Tibial artery (tissue), 4 donors: ENCODE measurements at regions of chr22 and their contacts with region 1.

Region 1: DNA sequence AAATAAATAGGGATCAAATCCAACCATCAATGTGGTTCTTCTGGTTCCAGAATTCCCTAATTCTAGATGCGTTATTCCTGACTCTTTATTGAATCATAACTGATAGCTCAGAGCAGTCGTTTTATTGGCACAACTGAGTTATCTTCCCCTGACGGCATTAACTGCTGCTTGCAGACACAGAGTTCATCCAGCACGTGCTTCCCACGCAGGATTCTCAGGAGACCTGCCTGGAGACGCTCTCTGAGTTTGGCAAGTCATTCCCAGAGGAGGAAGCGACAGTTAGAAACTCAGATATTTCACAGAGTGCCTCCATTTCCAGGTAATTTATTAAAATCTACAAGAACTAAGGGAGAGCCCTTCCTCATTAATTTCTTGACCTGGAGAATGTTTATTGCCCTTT is 35.4 kb upstream of the PHF21B start:
- DNase-seq: no peak
- H3K4me3 ChIP-seq: no peak overlapping the region
- H3K27ac ChIP-seq: no peak overlapping the region
- H3K4me1 ChIP-seq: no peaks in the 10 kb centered on the region
- H3K27me3 ChIP-seq: peaks cover 0 to 28% of the 10 kb centered on the region in 2 donors
- CTCF ChIP-seq: no peak

Region 2: DNA sequence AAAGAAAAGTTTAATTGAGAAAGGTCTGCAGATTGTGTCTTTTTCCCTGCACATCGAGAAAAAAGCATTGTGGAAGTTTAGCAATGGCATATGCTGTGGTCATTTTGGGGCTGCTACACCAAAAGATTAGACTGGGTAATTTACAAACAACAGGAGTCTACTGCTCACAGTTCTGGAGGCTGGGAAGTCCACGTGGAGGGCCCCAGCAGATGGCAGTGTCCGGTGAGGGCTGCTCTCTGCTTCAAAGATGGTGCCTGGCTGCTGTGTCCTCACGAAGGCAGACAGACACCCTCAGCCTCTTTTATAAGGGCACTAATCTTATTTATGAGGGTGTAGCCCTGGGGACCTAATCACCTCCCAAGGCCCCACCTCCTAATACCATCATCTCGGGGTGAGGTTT is 56.5 kb before region 1 on chr22:
- intact Hi-C with region 1: loop called (anchors 10 kb)
- DNase-seq: no peak
- H3K4me3 ChIP-seq: no peak overlapping the region
- H3K27ac ChIP-seq: no peak overlapping the region
- H3K4me1 ChIP-seq: no peaks in the 10 kb centered on the region
- H3K27me3 ChIP-seq: peaks cover 0 to 29% of the 10 kb centered on the region in 2 donors
- CTCF ChIP-seq: no peak

Region 3: GRCh38 chr22:45072322-45072903 is 27.2 kb after region 1 on chr22:
- intact Hi-C with region 1: no loop called
- DNase-seq: no peak
- H3K4me3 ChIP-seq: no peak overlapping the region
- H3K27ac ChIP-seq: no peak overlapping the region
- H3K4me1 ChIP-seq: no peaks in the 10 kb centered on the region
- H3K27me3 ChIP-seq: peaks cover 0 to 56% of the 10 kb centered on the region in 2 donors
- CTCF ChIP-seq: no peak

Region 4: DNA sequence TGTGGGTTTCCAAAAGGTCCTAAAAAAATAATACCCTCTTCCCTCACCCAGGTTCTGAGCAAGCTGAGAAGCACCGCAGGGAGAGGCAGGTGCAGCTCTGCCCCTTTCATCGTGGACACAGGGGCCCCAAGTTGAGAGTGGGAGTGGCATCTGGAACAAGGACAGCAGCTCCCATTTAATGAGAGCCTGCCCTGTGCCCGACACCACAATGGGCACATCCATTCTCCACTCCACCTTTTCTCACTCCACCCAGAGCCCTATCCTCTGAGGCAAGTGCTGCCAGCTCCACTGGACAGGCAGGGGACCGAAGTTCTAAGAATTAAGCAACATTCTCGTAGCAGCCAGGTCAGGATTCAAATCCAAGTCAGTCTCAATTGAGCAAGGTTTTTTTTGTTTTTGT is 579.6 kb after region 1 on chr22:
- intact Hi-C with region 1: no loop called
- DNase-seq: no peak
- H3K4me3 ChIP-seq: no peak overlapping the region
- H3K27ac ChIP-seq: no peak overlapping the region
- H3K4me1 ChIP-seq: no peaks in the 10 kb centered on the region
- H3K27me3 ChIP-seq: peaks cover 0 to 32% of the 10 kb centered on the region in 2 donors
- CTCF ChIP-seq: no peak